ENCODE measurements at regions of chr2 and their contacts with region 1.

Region 1: DNA sequence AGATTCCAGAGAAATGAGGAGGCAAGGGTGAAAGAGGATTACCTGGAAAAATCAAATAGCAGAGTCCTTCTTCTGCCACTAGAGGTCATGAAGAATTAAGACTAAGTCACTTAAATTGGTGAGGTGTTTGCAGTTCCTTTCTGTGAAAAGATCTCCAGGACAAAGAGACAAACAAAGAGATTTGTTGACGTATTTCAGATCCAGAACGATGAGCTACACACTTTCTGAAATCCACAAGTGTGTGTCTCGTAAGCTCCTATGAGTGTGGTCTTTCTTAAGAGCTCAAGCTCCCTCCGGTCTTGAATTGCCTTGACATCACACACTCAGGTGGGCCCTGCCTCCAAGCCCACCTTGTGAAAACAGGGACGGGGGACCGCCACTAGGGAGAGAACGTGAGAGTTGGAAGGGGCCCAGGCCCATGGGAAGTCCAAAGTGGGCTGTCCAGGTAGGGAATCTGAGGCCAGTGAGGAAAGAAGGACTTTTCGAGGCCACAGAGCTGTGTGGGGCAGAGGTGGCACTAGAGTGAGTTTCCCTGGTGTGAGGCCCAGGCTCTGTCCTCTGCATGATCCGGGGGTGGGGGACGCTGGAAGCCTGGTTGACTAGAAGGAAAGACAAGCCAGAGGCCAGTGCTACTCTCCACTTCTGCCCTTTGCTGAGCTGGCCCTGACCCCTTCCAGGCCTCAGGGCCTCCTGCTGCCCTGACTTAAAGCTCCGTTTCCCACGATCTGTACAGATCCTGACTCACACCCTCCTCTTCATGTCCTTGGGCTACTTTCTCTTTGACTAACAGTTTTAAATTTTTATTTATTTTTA is 168.1 kb upstream of the NCK2 start:
- DNase-seq: peak in 3 of 9 experiments; percentile 49 to 64 (median 56)
- ATAC-seq: peak; percentile 71
- H3K4me3 ChIP-seq: no peak overlapping the region
- H3K4me3 Mint-ChIP-seq: no peak overlapping the region
- H3K27ac ChIP-seq: no peak overlapping the region
- H3K27ac Mint-ChIP-seq: peak overlapping the region; percentile 85
- H3K4me1 ChIP-seq: peaks cover 12% of the 10 kb centered on the region
- H3K4me1 Mint-ChIP-seq: peaks cover 37% of the 10 kb centered on the region
- H3K27me3 ChIP-seq: no peaks in the 10 kb centered on the region
- H3K27me3 Mint-ChIP-seq: no peaks in the 10 kb centered on the region
- CTCF ChIP-seq: peak; percentile 76

Region 2: GRCh38 chr2:104976603-104977120 is 600.0 kb before region 1 on chr2:
- CTCF ChIA-PET with region 1: no interaction called
- POLR2A ChIA-PET with region 1: no interaction called
- intact Hi-C with region 1: no loop called
- DNase-seq: peak in 4 of 9 experiments; percentile 14 to 50 (median 22)
- ATAC-seq: peak; percentile 36
- H3K4me3 ChIP-seq: no peak overlapping the region
- H3K4me3 Mint-ChIP-seq: peak overlapping the region; percentile 59
- H3K27ac ChIP-seq: no peak overlapping the region
- H3K27ac Mint-ChIP-seq: peak overlapping the region; percentile 35
- H3K4me1 ChIP-seq: peaks cover 9% of the 10 kb centered on the region
- H3K4me1 Mint-ChIP-seq: peaks cover 15% of the 10 kb centered on the region
- H3K27me3 ChIP-seq: no peaks in the 10 kb centered on the region
- H3K27me3 Mint-ChIP-seq: no peaks in the 10 kb centered on the region
- CTCF ChIP-seq: no peak

Region 3: DNA sequence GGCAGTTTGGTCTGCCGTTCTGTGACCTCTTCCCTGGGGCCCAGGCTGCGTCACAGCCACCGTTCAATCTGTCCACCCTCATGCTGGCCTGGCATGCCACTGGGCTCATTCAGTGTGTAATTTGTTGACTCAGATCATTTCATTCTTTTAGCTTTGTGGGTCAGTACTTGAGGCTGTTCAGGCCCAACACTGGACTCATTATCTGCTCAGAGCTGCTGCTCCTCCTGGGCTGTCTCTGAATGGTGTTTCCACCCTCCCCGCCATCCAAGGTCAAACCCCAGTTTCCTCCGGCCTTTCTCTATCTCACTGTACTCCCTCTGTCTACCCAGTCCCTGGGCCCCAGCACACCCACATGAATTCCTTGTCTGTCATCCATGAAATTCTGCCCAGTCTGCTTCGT is 15.6 kb after region 1 on chr2:
- CTCF ChIA-PET with region 1: interaction called, 12 read pairs
- POLR2A ChIA-PET with region 1: interaction called, 4 read pairs
- intact Hi-C with region 1: no loop called
- DNase-seq: no peak
- ATAC-seq: no peak
- H3K4me3 ChIP-seq: no peak overlapping the region
- H3K4me3 Mint-ChIP-seq: no peak overlapping the region
- H3K27ac ChIP-seq: no peak overlapping the region
- H3K27ac Mint-ChIP-seq: no peak overlapping the region
- H3K4me1 ChIP-seq: peaks cover 11% of the 10 kb centered on the region
- H3K4me1 Mint-ChIP-seq: peaks cover 9% of the 10 kb centered on the region
- H3K27me3 ChIP-seq: no peaks in the 10 kb centered on the region
- H3K27me3 Mint-ChIP-seq: no peaks in the 10 kb centered on the region
- CTCF ChIP-seq: no peak

Region 4: DNA sequence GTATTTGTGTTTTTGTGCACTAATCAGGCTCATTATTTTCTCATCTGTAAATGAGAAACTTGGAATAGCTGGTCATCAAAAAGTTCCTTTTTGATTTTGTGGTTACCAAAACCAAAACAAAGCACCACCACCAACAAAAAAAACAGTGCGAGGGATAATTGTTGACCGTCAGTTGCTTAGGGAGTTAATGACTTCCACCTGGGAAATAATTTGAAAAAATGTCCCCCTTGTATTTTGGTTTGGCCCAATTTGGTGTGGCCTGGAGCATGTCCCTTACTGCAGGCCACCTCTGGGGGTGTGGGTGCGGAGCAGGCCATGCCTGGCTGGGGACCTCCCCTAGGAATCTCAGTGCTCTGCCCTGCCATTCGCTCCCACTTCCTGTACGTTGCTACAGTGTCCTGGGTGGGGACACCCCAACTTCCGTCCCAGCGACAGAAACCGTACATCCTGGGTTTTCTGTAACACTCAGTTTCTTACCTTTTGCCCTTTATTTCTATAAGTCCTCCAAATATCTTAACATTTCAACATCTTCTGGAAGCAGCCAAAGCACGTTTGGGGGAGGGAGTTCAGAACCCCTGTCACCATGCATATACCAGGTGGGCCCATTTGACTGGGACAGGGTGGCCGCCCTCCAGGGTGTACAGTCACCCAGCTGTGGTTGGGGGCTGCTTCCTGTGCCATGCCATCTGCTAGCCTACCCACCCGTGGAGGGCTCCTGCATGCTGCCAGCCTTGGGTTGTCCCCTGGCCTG is 199.3 kb after region 1 on chr2:
- CTCF ChIA-PET with region 1: interaction called, 14 read pairs
- POLR2A ChIA-PET with region 1: interaction called, 4 read pairs
- intact Hi-C with region 1: no loop called
- DNase-seq: peak in 4 of 9 experiments; percentile 52 to 82 (median 62)
- ATAC-seq: peak; percentile 59
- H3K4me3 ChIP-seq: peak overlapping the region; percentile 20 to 49
- H3K4me3 Mint-ChIP-seq: peak overlapping the region; percentile 80
- H3K27ac ChIP-seq: peak overlapping the region; percentile 64 to 83
- H3K27ac Mint-ChIP-seq: peak overlapping the region; percentile 96
- H3K4me1 ChIP-seq: peaks cover 98% of the 10 kb centered on the region
- H3K4me1 Mint-ChIP-seq: peaks cover 94% of the 10 kb centered on the region
- H3K27me3 ChIP-seq: no peaks in the 10 kb centered on the region
- H3K27me3 Mint-ChIP-seq: no peaks in the 10 kb centered on the region
- CTCF ChIP-seq: no peak

Region 5: GRCh38 chr2:105802587-105802986 is 225.9 kb after region 1 on chr2:
- CTCF ChIA-PET with region 1: interaction called, 4 read pairs
- POLR2A ChIA-PET with region 1: interaction called, 5 read pairs
- intact Hi-C with region 1: loop called in 1 of 2 experiments (anchors 5 kb)
- DNase-seq: peak in 8 of 9 experiments; percentile 26 to 95 (median 66)
- ATAC-seq: peak; percentile 76
- H3K4me3 ChIP-seq: peak overlapping the region in 1 of 2 experiments; percentile 9
- H3K4me3 Mint-ChIP-seq: peak overlapping the region; percentile 40
- H3K27ac ChIP-seq: peak overlapping the region; percentile 51 to 88
- H3K27ac Mint-ChIP-seq: peak overlapping the region; percentile 96
- H3K4me1 ChIP-seq: peaks cover 94% of the 10 kb centered on the region
- H3K4me1 Mint-ChIP-seq: peaks cover 93% of the 10 kb centered on the region
- H3K27me3 ChIP-seq: no peaks in the 10 kb centered on the region
- H3K27me3 Mint-ChIP-seq: no peaks in the 10 kb centered on the region
- CTCF ChIP-seq: no peak

Region 6: DNA sequence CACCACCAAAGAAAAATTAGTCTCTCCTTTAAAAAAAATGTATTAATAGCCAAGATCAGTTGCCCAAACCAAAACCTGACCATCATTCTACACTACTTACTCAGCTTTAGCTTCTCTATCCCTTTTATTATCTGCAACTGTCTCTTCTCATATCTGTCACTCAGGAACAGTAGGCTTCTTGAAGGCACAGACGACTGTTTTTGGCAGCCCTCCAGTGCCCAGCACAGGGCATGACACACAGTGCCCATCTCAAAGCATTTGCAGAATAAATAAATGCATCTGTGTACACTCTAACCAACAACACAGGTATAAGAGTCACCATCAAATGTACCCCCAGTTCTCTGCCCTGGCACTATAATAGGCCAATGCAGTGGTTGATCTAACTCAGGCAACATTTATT is 500.3 kb after region 1 on chr2:
- CTCF ChIA-PET with region 1: interaction called, 3 read pairs
- POLR2A ChIA-PET with region 1: no interaction called
- intact Hi-C with region 1: loop called in 1 of 2 experiments (anchors 5 kb)
- DNase-seq: peak in 1 of 9 experiments; percentile 36
- ATAC-seq: no peak
- H3K4me3 ChIP-seq: no peak overlapping the region
- H3K4me3 Mint-ChIP-seq: no peak overlapping the region
- H3K27ac ChIP-seq: no peak overlapping the region
- H3K27ac Mint-ChIP-seq: peak overlapping the region; percentile 1
- H3K4me1 ChIP-seq: peaks cover 28% of the 10 kb centered on the region
- H3K4me1 Mint-ChIP-seq: peaks cover 45% of the 10 kb centered on the region
- H3K27me3 ChIP-seq: no peaks in the 10 kb centered on the region
- H3K27me3 Mint-ChIP-seq: no peaks in the 10 kb centered on the region
- CTCF ChIP-seq: no peak

Region 7: GRCh38 chr2:106542811-106543259 is 966.2 kb after region 1 on chr2:
- CTCF ChIA-PET with region 1: interaction called, 3 read pairs
- POLR2A ChIA-PET with region 1: no interaction called
- intact Hi-C with region 1: loop called (anchors 2 to 5 kb)
- DNase-seq: peak; percentile 60 to 87 (median 76)
- ATAC-seq: peak; percentile 100
- H3K4me3 ChIP-seq: peak overlapping the region in 1 of 2 experiments; percentile 7
- H3K4me3 Mint-ChIP-seq: peak overlapping the region; percentile 65
- H3K27ac ChIP-seq: no peak overlapping the region
- H3K27ac Mint-ChIP-seq: no peak overlapping the region
- H3K4me1 ChIP-seq: peaks cover 4% of the 10 kb centered on the region
- H3K4me1 Mint-ChIP-seq: peaks cover 3% of the 10 kb centered on the region
- H3K27me3 ChIP-seq: peaks cover 0 to 4% of the 10 kb centered on the region in 2 experiments
- H3K27me3 Mint-ChIP-seq: peaks cover 27% of the 10 kb centered on the region
- CTCF ChIP-seq: peak; percentile 91